Caco-2 (cell line): ENCODE measurements at regions of chr5 and their contacts with region 1.

Region 1: GRCh38 chr5:147223948-147224791 is 10.7 kb upstream of the STK32A start:
- DNase-seq: peak; percentile 42 to 67
- H3K4me3 ChIP-seq: no peak overlapping the region
- H3K4me3 Mint-ChIP-seq: no peak overlapping the region
- H3K27ac Mint-ChIP-seq: no peak overlapping the region
- H3K4me1 ChIP-seq: no peaks in the 10 kb centered on the region
- H3K4me1 Mint-ChIP-seq: no peaks in the 10 kb centered on the region
- H3K27me3 ChIP-seq: no peaks in the 10 kb centered on the region
- H3K27me3 Mint-ChIP-seq: no peaks in the 10 kb centered on the region
- CTCF ChIP-seq: peak; percentile 70 to 78

Region 2: DNA sequence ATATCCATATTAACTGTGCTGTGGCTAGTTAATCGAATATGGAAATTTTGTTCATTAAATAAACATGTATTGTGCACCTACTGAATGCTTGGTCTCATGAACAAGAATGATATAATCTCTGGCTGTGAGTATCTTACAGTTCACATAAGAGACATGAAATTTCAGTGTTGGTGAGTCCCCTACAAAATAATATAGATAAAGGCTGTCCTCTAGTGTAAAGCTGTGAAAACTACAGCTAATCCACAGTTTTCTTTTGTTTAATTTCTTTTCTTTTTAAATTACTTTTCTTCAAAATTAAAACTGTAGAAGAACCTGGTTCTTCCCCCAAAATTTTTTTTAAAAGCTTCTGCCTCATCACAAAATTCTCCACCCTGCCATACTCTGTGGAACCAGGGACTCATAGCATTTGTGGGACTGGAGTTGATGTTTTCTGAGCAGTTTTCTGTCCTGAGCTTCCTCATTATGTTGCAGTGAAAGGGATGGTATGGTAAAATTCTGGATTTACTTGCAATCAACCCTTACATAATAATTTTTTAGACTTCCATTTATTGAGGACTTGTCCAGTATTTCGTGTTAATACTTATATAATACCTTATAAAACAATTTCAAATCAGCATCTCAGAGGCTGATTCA is 145.7 kb after region 1 on chr5:
- CTCF ChIA-PET with region 1: interaction called, 43 read pairs
- POLR2A ChIA-PET with region 1: no interaction called
- intact Hi-C with region 1: loop called (anchors 1 kb)
- DNase-seq: no peak
- H3K4me3 ChIP-seq: no peak overlapping the region
- H3K4me3 Mint-ChIP-seq: no peak overlapping the region
- H3K27ac Mint-ChIP-seq: no peak overlapping the region
- H3K4me1 ChIP-seq: no peaks in the 10 kb centered on the region
- H3K4me1 Mint-ChIP-seq: peaks cover 13% of the 10 kb centered on the region
- H3K27me3 ChIP-seq: no peaks in the 10 kb centered on the region
- H3K27me3 Mint-ChIP-seq: no peaks in the 10 kb centered on the region
- CTCF ChIP-seq: peak; percentile 50 to 51

Region 3: GRCh38 chr5:147391781-147392180 is 167.6 kb after region 1 on chr5:
- CTCF ChIA-PET with region 1: interaction called, 3 read pairs
- POLR2A ChIA-PET with region 1: no interaction called
- intact Hi-C with region 1: loop called (anchors 1 kb)
- DNase-seq: peak; percentile 47 to 54
- H3K4me3 ChIP-seq: no peak overlapping the region
- H3K4me3 Mint-ChIP-seq: no peak overlapping the region
- H3K27ac Mint-ChIP-seq: no peak overlapping the region
- H3K4me1 ChIP-seq: peaks cover 35% of the 10 kb centered on the region
- H3K4me1 Mint-ChIP-seq: peaks cover 36% of the 10 kb centered on the region
- H3K27me3 ChIP-seq: no peaks in the 10 kb centered on the region; the same call in 1 of the 2 replicates
- H3K27me3 Mint-ChIP-seq: no peaks in the 10 kb centered on the region
- CTCF ChIP-seq: peak; percentile 57 to 61

Region 4: GRCh38 chr5:147453875-147454814 is 230.0 kb after region 1 on chr5:
- CTCF ChIA-PET with region 1: interaction called, 6 read pairs
- POLR2A ChIA-PET with region 1: no interaction called
- intact Hi-C with region 1: loop called (anchors 1 kb)
- DNase-seq: peak; percentile 88 to 94
- H3K4me3 ChIP-seq: peak overlapping the region; percentile 92
- H3K4me3 Mint-ChIP-seq: peak overlapping the region; percentile 85
- H3K27ac Mint-ChIP-seq: peak overlapping the region; percentile 73
- H3K4me1 ChIP-seq: peaks cover 29% of the 10 kb centered on the region
- H3K4me1 Mint-ChIP-seq: peaks cover 23% of the 10 kb centered on the region
- H3K27me3 ChIP-seq: no peaks in the 10 kb centered on the region
- H3K27me3 Mint-ChIP-seq: no peaks in the 10 kb centered on the region
- CTCF ChIP-seq: peak; percentile 93 to 95